ENCODE measurements at regions of chr14 and their contacts with region 1.

Region 1: DNA sequence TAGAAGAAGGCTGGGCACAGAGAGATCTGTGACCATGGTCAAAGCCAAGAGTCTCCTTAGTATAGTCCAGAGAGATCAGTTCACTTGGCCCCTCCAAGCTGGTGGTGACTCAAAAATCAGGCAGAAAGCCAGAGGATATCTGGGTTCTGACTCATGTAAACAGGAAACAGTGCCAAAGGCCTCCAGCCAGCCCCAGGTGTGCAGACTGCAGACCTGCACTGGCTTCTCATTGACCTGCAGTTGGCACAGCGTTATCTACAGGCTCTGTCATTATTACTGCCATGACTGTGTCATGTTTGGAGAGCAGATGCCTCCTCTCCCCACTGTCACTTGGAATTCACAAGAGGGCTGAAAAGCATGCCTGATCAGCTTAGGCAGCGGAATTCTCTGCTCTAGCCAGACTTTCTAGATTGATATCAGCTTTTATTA is 295.8 kb upstream of the PRKD1 start:
- DNase-seq: peak; percentile 59 to 78
- ATAC-seq: peak; percentile 82
- H3K4me3 ChIP-seq: no peak overlapping the region
- H3K27ac ChIP-seq: peak overlapping the region; percentile 88 to 92
- H3K4me1 ChIP-seq: peaks cover 9 to 17% of the 10 kb centered on the region in 2 donors
- H3K27me3 ChIP-seq: no peaks in the 10 kb centered on the region

Region 2: GRCh38 chr14:29741909-29742401 is 481.4 kb before region 1 on chr14:
- intact Hi-C with region 1: loop called in 1 of 2 experiments (anchors 5 kb)
- DNase-seq: no peak
- ATAC-seq: peak; percentile 58
- H3K4me3 ChIP-seq: no peak overlapping the region
- H3K27ac ChIP-seq: no peak overlapping the region
- H3K4me1 ChIP-seq: peaks cover 2 to 5% of the 10 kb centered on the region in 2 donors
- H3K27me3 ChIP-seq: no peaks in the 10 kb centered on the region

Region 3: GRCh38 chr14:29927376-29928116 is 295.9 kb before region 1 on chr14 and contains the start of gene PRKD1:
- intact Hi-C with region 1: loop called in 1 of 2 experiments (anchors 10 kb)
- DNase-seq: peak; percentile 70 to 90
- ATAC-seq: peak; percentile 90
- H3K4me3 ChIP-seq: peak within 1 kb of the TSS; percentile 95 to 99
- H3K27ac ChIP-seq: peak within 1 kb of the TSS; percentile 85 to 94
- H3K4me1 ChIP-seq: peaks cover 5 to 6% of the 10 kb centered on the region in 2 donors
- H3K27me3 ChIP-seq: no peaks in the 10 kb centered on the region
- total RNA-seq, gene PRKD1: 24.8 to 27.9 TPM

Region 4: DNA sequence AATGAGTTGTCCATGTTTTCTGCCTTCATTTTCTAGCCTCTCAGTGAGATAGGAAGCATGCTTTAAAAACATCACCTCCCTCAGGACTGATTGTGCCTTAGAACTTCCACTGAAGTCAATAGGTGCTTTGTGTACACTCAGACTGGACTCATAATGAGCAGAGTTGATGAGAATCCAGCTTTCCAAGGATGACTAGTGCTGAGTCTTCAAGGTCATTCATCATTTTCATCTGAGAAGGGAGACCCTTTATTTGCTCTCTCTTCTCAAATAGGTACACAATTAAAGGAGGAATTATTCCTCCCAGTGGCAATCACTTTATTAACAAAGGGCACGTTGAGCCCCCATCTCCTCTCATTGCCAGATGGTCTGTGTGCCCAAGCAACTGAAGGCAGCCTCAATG is 84.8 kb before region 1 on chr14:
- intact Hi-C with region 1: no loop called
- DNase-seq: no peak
- ATAC-seq: no peak
- H3K4me3 ChIP-seq: no peak overlapping the region
- H3K27ac ChIP-seq: no peak overlapping the region
- H3K4me1 ChIP-seq: no peaks in the 10 kb centered on the region
- H3K27me3 ChIP-seq: no peaks in the 10 kb centered on the region

Region 5: DNA sequence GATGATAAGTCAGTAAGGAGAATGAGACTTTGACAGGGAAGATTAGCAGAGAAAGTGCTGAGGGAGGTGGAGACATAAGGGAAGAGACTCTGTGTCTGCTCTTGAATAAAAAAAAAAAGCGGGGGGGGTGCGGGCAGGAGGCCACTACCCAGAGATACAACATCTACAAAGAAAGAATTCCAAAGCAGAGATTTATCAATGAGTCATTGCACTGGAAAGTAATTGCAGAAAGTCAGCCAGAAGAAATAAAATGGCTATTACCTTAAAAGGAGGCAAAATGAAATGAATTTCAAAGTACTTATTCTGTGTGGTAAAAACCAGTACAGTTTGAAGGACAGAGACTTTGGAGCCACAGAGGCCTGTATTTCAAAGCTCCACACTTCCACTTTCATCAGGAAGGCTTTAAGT is 28.7 kb before region 1 on chr14:
- intact Hi-C with region 1: loop called in 1 of 2 experiments (anchors 2 kb)
- DNase-seq: no peak
- ATAC-seq: peak; percentile 58
- H3K4me3 ChIP-seq: no peak overlapping the region
- H3K27ac ChIP-seq: peak overlapping the region in 1 of 2 donors; percentile 98
- H3K4me1 ChIP-seq: peaks cover 0 to 3% of the 10 kb centered on the region in 2 donors
- H3K27me3 ChIP-seq: no peaks in the 10 kb centered on the region

Region 6: GRCh38 chr14:30270200-30271161 is 47.1 kb after region 1 on chr14:
- intact Hi-C with region 1: loop called in 1 of 2 experiments (anchors 5 kb)
- DNase-seq: peak; percentile 90 to 94
- ATAC-seq: peak; percentile 91
- H3K4me3 ChIP-seq: peak overlapping the region in 1 of 2 donors; percentile 55
- H3K27ac ChIP-seq: no peak overlapping the region
- H3K4me1 ChIP-seq: no peaks in the 10 kb centered on the region
- H3K27me3 ChIP-seq: no peaks in the 10 kb centered on the region